Endothelial cell of umbilical vein (primary cell): ENCODE measurements at regions of chr12 and their contacts with region 1.

Region 1: DNA sequence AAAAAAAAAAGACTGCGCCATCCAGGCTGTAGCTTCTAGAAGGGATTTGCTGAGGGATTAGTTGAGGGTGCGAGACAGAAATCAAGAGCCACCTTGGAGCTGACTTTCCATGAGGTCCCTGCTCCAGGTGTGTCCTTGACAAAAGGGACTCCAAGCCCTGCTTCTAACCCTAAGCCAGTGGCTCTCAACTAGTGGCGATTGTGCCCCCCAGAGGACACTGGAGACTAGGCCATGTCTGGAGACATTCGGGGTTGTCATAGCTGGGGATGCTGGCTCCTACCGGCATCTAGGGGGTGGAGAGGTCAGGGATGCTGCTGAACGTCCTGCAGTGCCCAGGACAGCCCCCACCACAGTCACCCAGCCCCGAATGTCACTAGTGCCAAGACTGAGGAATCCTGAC is 40.6 kb downstream of the SPRING1 start:
- DNase-seq: no peak
- H3K4me3 ChIP-seq: no peak overlapping the region
- H3K27ac ChIP-seq: no peak overlapping the region
- H3K4me1 ChIP-seq: no peaks in the 10 kb centered on the region
- H3K27me3 ChIP-seq: peaks cover 23 to 26% of the 10 kb centered on the region in 2 experiments
- CTCF ChIP-seq: peak; percentile 15 to 37
- POLR2A ChIP-seq: no peak

Region 2: DNA sequence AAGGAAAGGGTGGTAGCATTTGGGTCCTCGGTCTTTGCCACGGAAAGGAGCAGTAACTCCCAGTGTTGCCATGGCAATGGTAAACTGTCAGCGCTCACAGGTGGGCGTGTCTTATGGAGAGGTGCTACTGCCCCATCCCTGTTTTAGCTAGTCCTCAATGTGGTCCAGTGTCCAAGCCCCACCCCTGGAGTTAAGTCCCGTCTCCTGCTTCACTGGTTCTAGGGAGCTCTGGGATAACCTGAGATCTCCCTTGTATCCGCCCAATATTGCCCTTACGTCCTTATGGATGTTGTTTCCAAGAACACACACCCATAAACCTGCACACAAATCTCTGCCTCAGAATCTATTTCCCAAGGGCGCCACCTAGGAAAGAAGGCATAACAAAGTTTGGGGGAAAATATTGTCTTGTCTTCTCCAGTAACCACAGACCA is 23.6 kb before region 1 on chr12:
- CTCF ChIA-PET with region 1: no interaction called
- POLR2A ChIA-PET with region 1: no interaction called
- dilution Hi-C with region 1: no loop called
- intact Hi-C with region 1: no loop called
- DNase-seq: no peak
- H3K4me3 ChIP-seq: no peak overlapping the region
- H3K27ac ChIP-seq: no peak overlapping the region
- H3K4me1 ChIP-seq: peaks cover 6% of the 10 kb centered on the region
- H3K27me3 ChIP-seq: no peaks in the 10 kb centered on the region
- CTCF ChIP-seq: no peak
- POLR2A ChIP-seq: no peak

Region 3: DNA sequence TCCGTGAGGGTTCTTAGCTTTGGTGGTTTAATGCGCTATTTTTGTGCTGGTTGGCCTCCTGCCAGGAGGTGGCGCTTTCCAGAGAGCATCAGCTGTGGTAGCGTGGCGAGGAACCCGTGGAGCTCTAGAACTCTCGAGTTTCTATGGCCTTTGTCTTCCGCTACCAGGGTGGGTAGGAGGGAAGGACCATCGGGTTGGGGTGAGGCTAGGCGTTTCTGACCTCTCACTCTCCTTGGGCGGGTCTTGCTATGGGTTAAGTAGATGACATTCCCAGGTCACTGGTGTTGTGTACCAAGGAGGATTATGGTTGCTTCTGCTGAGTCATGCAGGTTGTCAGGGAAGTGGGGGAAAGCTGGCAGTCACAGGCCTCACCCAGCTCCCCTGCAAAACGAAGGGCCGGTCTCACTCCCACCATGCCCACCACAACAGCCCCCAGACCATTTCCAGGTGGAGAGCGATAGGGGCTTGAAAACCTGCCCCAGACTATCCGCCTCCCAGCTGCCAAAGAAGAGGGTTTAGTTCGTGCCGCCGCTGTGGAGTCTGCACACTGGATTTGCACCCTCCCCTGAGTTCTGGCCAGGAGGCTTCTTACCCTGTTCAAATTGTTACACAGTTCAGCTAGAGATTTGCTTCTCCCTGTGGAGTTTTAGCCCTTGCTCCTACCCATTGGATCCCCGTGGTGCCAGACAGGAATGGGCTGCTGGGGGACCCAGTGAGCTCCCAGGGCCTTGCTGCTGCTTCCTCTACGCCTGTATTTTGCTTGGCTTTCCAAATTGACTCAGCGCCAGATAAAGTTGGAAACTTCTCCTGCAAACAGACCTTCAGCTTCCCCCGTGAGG is 62.7 kb after region 1 on chr12:
- CTCF ChIA-PET with region 1: no interaction called
- POLR2A ChIA-PET with region 1: no interaction called
- dilution Hi-C with region 1: no loop called
- intact Hi-C with region 1: no loop called
- DNase-seq: peak; percentile 50
- H3K4me3 ChIP-seq: no peak overlapping the region
- H3K27ac ChIP-seq: no peak overlapping the region
- H3K4me1 ChIP-seq: no peaks in the 10 kb centered on the region
- H3K27me3 ChIP-seq: no peaks in the 10 kb centered on the region
- CTCF ChIP-seq: no peak
- POLR2A ChIP-seq: no peak

Region 4: GRCh38 chr12:116880817-116881324 is 183.6 kb after region 1 on chr12:
- CTCF ChIA-PET with region 1: interaction called, 11 read pairs
- POLR2A ChIA-PET with region 1: no interaction called
- dilution Hi-C with region 1: no loop called
- intact Hi-C with region 1: no loop called
- DNase-seq: peak; percentile 13
- H3K4me3 ChIP-seq: no peak overlapping the region
- H3K27ac ChIP-seq: no peak overlapping the region
- H3K4me1 ChIP-seq: no peaks in the 10 kb centered on the region
- H3K27me3 ChIP-seq: peaks cover 57 to 72% of the 10 kb centered on the region in 2 experiments
- CTCF ChIP-seq: no peak
- POLR2A ChIP-seq: no peak

Region 5: DNA sequence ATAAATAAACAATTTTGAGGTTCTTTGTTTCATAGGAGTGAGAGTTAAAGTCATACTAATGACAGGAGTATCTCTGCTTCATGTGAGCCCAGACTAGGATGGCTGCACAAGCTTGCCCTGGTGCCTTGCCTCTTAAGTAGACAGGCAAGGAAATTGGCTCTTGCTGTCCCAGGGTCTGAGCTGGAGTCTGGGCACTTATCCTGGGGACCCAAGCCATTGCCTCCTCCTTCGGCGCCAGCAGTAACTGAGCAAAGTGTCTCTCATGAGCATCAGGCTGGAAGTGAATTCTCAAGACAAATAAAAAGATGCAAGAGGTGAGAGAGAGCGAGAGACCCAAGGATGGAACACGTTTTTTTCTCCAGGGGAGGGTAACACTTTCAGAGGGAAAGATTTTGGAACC is 206.5 kb after region 1 on chr12:
- CTCF ChIA-PET with region 1: no interaction called
- POLR2A ChIA-PET with region 1: no interaction called
- dilution Hi-C with region 1: no loop called
- intact Hi-C with region 1: no loop called
- DNase-seq: no peak
- H3K4me3 ChIP-seq: no peak overlapping the region
- H3K27ac ChIP-seq: no peak overlapping the region
- H3K4me1 ChIP-seq: no peaks in the 10 kb centered on the region
- H3K27me3 ChIP-seq: peaks cover 8 to 13% of the 10 kb centered on the region in 2 experiments
- CTCF ChIP-seq: no peak
- POLR2A ChIP-seq: no peak